ENCODE measurements at regions of chr17 and their contacts with region 1.

Region 1: GRCh38 chr17:3260600-3260999 is 37.6 kb downstream of the OR3A1 start:
- DNase-seq: no peak
- H3K4me3 ChIP-seq: no peak overlapping the region
- H3K27ac ChIP-seq: no peak overlapping the region
- H3K4me1 ChIP-seq: no peaks in the 10 kb centered on the region
- H3K27me3 ChIP-seq: no peaks in the 10 kb centered on the region
- CTCF ChIP-seq: no peak

Region 2: DNA sequence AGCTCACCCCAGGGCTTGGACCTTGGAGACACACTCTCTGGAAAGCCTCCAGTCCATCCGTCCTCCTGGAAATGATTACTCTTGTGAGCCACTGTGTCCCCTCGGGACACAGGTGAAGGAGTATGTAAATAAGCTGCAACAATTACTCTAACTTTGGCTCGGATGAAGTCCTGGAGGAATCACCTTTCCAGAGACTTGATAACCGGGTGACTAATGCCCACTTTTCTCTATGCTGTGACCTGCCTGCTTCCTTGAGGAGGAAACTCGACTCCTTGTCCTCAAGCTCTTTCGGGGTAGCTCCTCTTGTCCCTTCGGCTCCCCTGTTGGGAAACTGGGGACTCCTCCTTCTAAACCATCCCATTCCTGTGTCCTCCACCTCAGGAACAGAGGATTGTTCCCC is 53.2 kb before region 1 on chr17 and contains the start of gene OR1A1:
- CTCF ChIA-PET with region 1: no interaction called
- dilution Hi-C with region 1: no loop called
- in situ Hi-C with region 1: no loop called
- intact Hi-C with region 1: no loop called
- DNase-seq: no peak
- H3K4me3 ChIP-seq: no peak within 1 kb of the TSS
- H3K27ac ChIP-seq: no peak within 1 kb of the TSS
- H3K4me1 ChIP-seq: no peaks in the 10 kb centered on the region
- H3K27me3 ChIP-seq: no peaks in the 10 kb centered on the region
- CTCF ChIP-seq: no peak
- total RNA-seq, gene OR1A1: not detected

Region 3: GRCh38 chr17:3335884-3336283 is 75.3 kb after region 1 on chr17:
- CTCF ChIA-PET with region 1: no interaction called
- dilution Hi-C with region 1: loop called (anchors 10 kb)
- in situ Hi-C with region 1: no loop called
- intact Hi-C with region 1: no loop called
- DNase-seq: peak; percentile 14
- H3K4me3 ChIP-seq: no peak overlapping the region
- H3K27ac ChIP-seq: no peak overlapping the region
- H3K4me1 ChIP-seq: no peaks in the 10 kb centered on the region
- H3K27me3 ChIP-seq: no peaks in the 10 kb centered on the region
- CTCF ChIP-seq: peak in 1 of 2 donors; percentile 38

Region 4: GRCh38 chr17:3543453-3543852 is 282.9 kb after region 1 on chr17:
- CTCF ChIA-PET with region 1: no interaction called
- dilution Hi-C with region 1: no loop called
- in situ Hi-C with region 1: no loop called
- intact Hi-C with region 1: no loop called
- DNase-seq: no peak
- H3K4me3 ChIP-seq: no peak overlapping the region
- H3K27ac ChIP-seq: no peak overlapping the region
- H3K4me1 ChIP-seq: no peaks in the 10 kb centered on the region
- H3K27me3 ChIP-seq: no peaks in the 10 kb centered on the region
- CTCF ChIP-seq: no peak

Measured in mammary epithelial cell (primary cell).